CD8-positive, alpha-beta T cell (primary cell): ENCODE measurements at regions of chr9 and their contacts with region 1.

Region 1: DNA sequence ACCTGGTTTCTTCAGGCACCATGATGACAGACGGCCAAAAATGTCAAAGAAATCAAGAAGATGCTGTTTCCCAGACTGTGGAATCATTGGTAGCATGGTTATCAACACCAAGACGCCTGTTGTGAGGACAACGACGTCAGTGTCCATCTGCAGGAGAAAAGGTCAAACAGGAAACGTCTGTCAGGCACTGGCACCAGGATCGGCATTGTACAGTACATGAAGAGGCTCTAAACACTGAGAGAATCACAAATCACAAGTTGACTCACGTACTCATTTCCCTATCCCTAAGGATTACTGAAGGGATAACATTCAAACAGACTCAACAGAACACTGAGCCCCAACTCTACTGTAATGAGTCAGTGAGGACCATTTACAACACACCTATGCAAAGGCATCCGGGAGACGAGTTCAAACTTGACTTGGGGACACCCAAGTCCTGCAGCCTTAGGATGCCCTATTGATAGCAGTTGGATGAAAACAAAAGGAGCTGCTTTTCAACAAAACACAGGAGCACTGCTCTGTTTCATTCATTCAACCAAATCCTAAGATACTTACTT is 21.0 kb downstream of the TSC1 start:
- DNase-seq: no peak
- ATAC-seq: no peak
- H3K4me3 ChIP-seq: no peak overlapping the region
- H3K4me3 Mint-ChIP-seq: no peak overlapping the region
- H3K27ac ChIP-seq: no peak overlapping the region
- H3K27ac Mint-ChIP-seq: no peak overlapping the region
- H3K4me1 ChIP-seq: no peaks in the 10 kb centered on the region
- H3K4me1 Mint-ChIP-seq: no peaks in the 10 kb centered on the region
- H3K27me3 ChIP-seq: no peaks in the 10 kb centered on the region
- H3K27me3 Mint-ChIP-seq: no peaks in the 10 kb centered on the region
- CTCF ChIP-seq: no peak

Region 2: GRCh38 chr9:132935026-132935425 is 11.6 kb after region 1 on chr9:
- CTCF ChIA-PET with region 1: interaction called, 10 read pairs
- POLR2A ChIA-PET with region 1: interaction called, 5 read pairs
- intact Hi-C with region 1: no loop called
- DNase-seq: no peak
- ATAC-seq: no peak
- H3K4me3 ChIP-seq: no peak overlapping the region
- H3K4me3 Mint-ChIP-seq: no peak overlapping the region
- H3K27ac ChIP-seq: no peak overlapping the region
- H3K27ac Mint-ChIP-seq: no peak overlapping the region
- H3K4me1 ChIP-seq: no peaks in the 10 kb centered on the region
- H3K4me1 Mint-ChIP-seq: peaks cover 9% of the 10 kb centered on the region
- H3K27me3 ChIP-seq: no peaks in the 10 kb centered on the region
- H3K27me3 Mint-ChIP-seq: no peaks in the 10 kb centered on the region
- CTCF ChIP-seq: no peak